ENCODE measurements at regions of chr13 and their contacts with region 1.

Region 1: DNA sequence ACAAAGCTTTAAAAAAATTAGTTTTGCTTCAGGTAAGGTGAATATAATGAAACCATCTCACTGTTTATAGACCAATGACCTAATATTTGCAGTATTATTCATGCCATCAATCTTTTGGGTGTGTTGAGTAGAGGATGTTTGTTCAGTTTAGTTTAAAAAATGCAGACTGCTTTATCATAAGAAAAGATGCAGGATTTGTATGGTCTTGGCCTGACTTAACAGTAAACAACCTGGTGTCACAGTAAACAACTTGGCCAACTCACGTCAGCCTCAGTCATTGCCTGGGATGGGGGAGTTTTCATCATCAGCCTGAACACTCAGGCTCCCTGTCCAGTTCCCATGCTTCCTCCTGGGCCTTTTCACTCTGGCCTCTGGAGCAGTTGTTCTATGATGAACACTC is 55.1 kb downstream of the LMO7 start:
- DNase-seq: no peak
- H3K4me3 ChIP-seq: no peak overlapping the region
- H3K27ac ChIP-seq: no peak overlapping the region
- H3K4me1 ChIP-seq: peaks cover 0 to 5% (median 1%) of the 10 kb centered on the region in 4 donors
- H3K27me3 ChIP-seq: no peaks in the 10 kb centered on the region
- CTCF ChIP-seq: no peak

Region 2: DNA sequence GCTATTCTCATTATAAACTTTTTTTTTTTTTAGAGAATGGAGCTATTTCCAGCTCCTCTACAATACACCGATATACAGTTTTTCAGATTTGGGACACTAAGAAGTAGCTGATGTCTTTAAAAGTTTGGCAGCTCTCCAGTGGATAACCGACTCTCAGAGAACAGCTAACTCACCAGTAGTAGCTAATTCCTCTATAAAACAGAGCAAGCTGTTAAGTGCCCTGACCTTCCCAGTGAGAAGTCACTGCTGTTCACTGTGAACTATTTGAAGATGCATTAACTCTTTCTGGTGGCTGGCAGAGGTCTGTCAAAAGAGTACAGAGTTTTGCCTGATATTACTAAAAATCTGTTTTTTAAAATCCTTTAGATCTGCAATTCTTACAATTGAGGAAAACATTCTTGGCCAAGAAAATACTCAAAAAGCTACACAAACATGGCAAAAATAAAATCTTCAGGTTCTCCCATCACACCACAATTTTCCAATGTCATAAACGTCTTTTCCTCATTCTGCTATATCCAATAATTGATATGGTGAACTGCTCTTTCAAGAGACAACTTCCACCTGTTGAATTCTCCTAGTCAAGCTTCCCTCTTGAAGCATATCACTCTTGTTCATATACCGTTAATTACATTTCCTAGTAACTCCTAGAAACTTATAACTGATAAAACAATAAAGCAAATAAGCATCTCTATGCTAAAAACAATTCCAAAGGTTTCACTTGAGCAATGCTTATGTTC is 253.4 kb before region 1 on chr13:
- intact Hi-C with region 1: no loop called
- DNase-seq: no peak
- H3K4me3 ChIP-seq: no peak overlapping the region
- H3K27ac ChIP-seq: no peak overlapping the region
- H3K4me1 ChIP-seq: peaks cover 0 to 10% (median 1%) of the 10 kb centered on the region in 4 donors
- H3K27me3 ChIP-seq: no peaks in the 10 kb centered on the region
- CTCF ChIP-seq: no peak

Region 3: DNA sequence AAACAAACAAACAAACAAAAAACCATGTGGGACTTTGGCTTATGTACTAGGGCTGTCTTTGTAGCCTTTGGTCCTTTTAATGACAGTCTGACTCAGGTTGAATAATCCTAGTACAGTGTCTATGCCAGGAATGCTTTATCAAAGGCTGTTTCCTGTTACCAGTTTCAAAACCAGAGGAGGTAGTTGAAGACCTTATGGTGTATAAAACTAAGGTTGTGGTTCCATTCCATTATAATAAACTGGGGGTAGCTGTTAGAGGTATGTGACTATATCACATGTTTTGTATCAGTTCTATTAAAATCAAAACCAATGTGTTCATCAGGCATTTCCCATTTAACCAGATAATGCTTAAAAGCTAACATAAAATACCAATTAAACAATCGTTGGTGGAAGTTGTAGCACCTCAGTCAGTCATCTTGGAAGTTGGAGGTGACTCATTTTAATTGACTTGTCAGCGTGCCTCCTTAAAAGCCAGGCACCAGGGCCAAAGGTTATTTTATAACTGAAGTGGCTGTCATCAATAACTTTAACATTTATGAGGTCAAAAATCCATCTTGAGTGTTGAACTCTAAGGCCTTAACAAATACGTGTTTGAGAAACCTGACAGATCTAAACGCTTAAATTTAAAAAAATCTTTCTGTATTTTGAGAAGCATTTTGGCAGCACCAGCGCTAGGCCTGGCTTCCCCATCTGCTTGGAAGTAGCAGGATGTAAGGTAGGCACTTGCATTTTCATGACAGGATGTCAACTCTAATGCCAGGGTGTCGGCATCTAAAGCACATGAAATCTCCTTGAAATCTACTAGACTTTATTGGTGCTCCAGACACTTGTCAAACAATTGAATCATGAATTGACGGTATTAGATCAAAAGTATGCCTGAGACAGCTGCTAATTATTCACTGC is 107.4 kb after region 1 on chr13:
- intact Hi-C with region 1: loop called (anchors 10 kb)
- DNase-seq: no peak
- H3K4me3 ChIP-seq: no peak overlapping the region
- H3K27ac ChIP-seq: no peak overlapping the region
- H3K4me1 ChIP-seq: peaks cover 0 to 6% (median 4%) of the 10 kb centered on the region in 4 donors
- H3K27me3 ChIP-seq: no peaks in the 10 kb centered on the region
- CTCF ChIP-seq: no peak

Region 4: GRCh38 chr13:76473552-76474134 is 782.5 kb after region 1 on chr13:
- intact Hi-C with region 1: loop called (anchors 10 kb)
- DNase-seq: peak; percentile 69 to 78
- H3K4me3 ChIP-seq: no peak overlapping the region
- H3K27ac ChIP-seq: no peak overlapping the region
- H3K4me1 ChIP-seq: no peaks in the 10 kb centered on the region
- H3K27me3 ChIP-seq: no peaks in the 10 kb centered on the region
- CTCF ChIP-seq: peak; percentile 72 to 94

Region 5: GRCh38 chr13:76886292-76887075 is 1195.3 kb after region 1 on chr13 and contains the start of gene KCTD12:
- intact Hi-C with region 1: loop called (anchors 10 kb)
- DNase-seq: peak; percentile 90 to 94
- H3K4me3 ChIP-seq: peak within 1 kb of the TSS; percentile 69 to 78
- H3K27ac ChIP-seq: peak within 1 kb of the TSS; percentile 87 to 88
- H3K4me1 ChIP-seq: peaks cover 0 to 27% (median 12%) of the 10 kb centered on the region in 4 donors
- H3K27me3 ChIP-seq: no peaks in the 10 kb centered on the region
- CTCF ChIP-seq: peak in 1 of 2 experiments; percentile 34

Measured in tibial artery (tissue), 4 donors.